Activated T-helper 1 cell treated with anti-CD3 and anti-CD28 coated beads, Interleukin-12 subunit alpha, Interleukin-12 subunit beta, Interleukin-2, Interleukin-4 antibody, amounts not matched to agents 30 ng/mL and 10 ng/mL and 1 ng/mL, durations not matched to agents 14 hours and 24 hours and 36 hours (primary cell): ENCODE measurements at regions of chr7 and their contacts with region 1.

Region 1: GRCh38 chr7:17255926-17256325 is 42.5 kb upstream of the AHR start:
- DNase-seq: no peak
- H3K4me3 Mint-ChIP-seq: no peak overlapping the region
- H3K27ac Mint-ChIP-seq: no peak overlapping the region
- H3K4me1 Mint-ChIP-seq: peaks cover 12% of the 10 kb centered on the region
- H3K27me3 Mint-ChIP-seq: no peaks in the 10 kb centered on the region

Region 2: GRCh38 chr7:16999541-17000267 is 256.2 kb before region 1 on chr7:
- intact Hi-C with region 1: loop called (anchors 1 kb)
- DNase-seq: peak; percentile 14
- H3K4me3 Mint-ChIP-seq: peak overlapping the region; percentile 62
- H3K27ac Mint-ChIP-seq: peak overlapping the region; percentile 77
- H3K4me1 Mint-ChIP-seq: peaks cover 17% of the 10 kb centered on the region
- H3K27me3 Mint-ChIP-seq: peaks cover 4% of the 10 kb centered on the region

Region 3: DNA sequence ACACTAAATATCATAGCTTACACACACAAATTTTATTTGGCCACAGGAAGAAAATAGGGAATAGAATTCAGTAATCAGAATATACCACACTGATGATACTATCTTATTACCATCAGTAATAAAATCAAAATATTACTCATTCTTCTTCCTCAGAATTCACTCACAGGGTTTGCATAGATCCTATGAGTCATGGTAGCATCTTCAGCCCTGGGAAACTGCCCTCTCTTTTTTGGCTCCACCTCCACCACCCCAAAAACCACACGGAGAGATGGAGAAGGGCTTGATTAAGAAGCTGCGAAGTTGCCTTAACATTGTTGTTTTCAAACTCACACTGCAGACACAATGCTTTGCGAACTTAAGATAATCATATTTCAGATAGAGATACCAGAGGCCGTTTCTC is 111.6 kb before region 1 on chr7:
- intact Hi-C with region 1: loop called (anchors 1 kb)
- DNase-seq: peak; percentile 49
- H3K4me3 Mint-ChIP-seq: peak overlapping the region; percentile 1
- H3K27ac Mint-ChIP-seq: peak overlapping the region; percentile 25
- H3K4me1 Mint-ChIP-seq: peaks cover 46% of the 10 kb centered on the region
- H3K27me3 Mint-ChIP-seq: no peaks in the 10 kb centered on the region

Region 4: DNA sequence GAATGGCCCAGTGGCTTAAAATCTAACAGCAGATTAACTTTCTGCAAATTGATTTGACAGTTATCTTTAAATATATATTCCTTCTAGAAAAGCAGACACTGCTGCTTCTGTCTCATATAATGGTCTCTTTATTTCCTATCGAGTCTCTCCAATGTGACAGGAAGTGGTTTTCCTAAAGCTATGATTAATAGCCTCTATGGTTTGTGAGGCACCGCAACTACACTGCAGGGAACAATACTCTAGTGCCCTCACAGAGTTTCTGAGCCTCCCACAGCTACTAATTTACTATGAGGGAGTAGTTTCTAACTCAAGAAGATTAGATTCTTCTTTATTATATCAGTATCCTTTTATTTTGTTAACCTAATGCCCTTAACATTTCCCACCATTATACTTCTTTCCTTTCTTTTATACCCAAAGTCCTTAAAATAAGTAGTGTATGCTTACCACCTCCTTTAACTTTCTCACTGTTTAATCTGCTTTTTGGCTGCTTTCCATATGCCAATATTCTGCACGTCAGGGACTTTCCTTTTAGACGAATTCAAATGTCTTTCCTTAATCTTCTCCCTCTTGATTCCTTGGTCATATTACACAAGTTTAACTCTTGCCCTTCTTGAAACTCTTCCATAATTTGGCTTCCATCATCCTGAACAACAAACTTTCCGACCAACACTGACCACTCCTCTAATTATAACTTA is 18.8 kb after region 1 on chr7:
- intact Hi-C with region 1: loop called (anchors 1 kb)
- DNase-seq: no peak
- H3K4me3 Mint-ChIP-seq: no peak overlapping the region
- H3K27ac Mint-ChIP-seq: no peak overlapping the region
- H3K4me1 Mint-ChIP-seq: peaks cover 18% of the 10 kb centered on the region
- H3K27me3 Mint-ChIP-seq: no peaks in the 10 kb centered on the region